MCF 10A (cell line): ENCODE measurements at regions of chr10 and their contacts with region 1.

Region 1: DNA sequence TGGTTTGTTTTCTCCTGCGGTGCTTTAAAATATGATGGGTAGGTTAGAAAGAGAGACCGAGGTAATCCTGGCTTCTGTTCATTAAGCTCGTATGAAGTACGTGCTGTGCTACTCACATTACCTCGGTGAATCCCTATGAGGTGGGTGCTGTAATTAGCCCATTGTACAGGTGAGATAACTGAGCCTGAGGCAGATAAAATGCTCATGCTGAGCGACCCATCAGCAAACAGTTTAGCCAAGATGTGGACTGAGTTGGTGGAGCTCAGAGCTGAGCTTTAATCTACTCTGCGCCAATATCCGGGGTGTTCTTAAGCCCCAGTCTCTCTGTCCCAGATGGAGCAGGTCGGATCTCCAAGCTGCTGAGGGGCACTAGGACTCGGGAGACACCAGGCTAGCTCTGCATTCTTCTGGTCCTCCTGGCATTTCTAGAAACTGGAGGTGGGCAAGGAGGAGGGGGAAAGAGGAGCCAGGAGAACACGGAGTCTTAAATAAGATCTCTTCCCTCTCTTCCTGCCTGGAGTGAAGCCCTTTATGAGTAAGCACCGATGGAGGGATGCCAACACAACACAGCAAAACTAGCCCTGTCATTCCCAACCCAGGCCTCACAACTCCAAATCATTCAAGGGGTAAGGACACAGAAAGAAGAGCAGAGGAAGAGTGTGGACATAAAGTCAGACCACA is 458.5 kb downstream of the KCNMA1 start:
- DNase-seq: peak; percentile 87
- H3K4me3 Mint-ChIP-seq: no peak overlapping the region
- H3K27ac Mint-ChIP-seq: peak overlapping the region; percentile 85
- H3K4me1 Mint-ChIP-seq: peaks cover 8% of the 10 kb centered on the region
- H3K27me3 Mint-ChIP-seq: no peaks in the 10 kb centered on the region
- CTCF ChIP-seq: no peak

Region 2: GRCh38 chr10:77236700-77237099 is 57.5 kb after region 1 on chr10:
- CTCF ChIA-PET with region 1: no interaction called
- POLR2A ChIA-PET with region 1: no interaction called
- intact Hi-C with region 1: loop called (anchors 5 kb)
- DNase-seq: peak; percentile 55
- H3K4me3 Mint-ChIP-seq: no peak overlapping the region
- H3K27ac Mint-ChIP-seq: no peak overlapping the region
- H3K4me1 Mint-ChIP-seq: peaks cover 7% of the 10 kb centered on the region
- H3K27me3 Mint-ChIP-seq: no peaks in the 10 kb centered on the region
- CTCF ChIP-seq: no peak

Region 3: DNA sequence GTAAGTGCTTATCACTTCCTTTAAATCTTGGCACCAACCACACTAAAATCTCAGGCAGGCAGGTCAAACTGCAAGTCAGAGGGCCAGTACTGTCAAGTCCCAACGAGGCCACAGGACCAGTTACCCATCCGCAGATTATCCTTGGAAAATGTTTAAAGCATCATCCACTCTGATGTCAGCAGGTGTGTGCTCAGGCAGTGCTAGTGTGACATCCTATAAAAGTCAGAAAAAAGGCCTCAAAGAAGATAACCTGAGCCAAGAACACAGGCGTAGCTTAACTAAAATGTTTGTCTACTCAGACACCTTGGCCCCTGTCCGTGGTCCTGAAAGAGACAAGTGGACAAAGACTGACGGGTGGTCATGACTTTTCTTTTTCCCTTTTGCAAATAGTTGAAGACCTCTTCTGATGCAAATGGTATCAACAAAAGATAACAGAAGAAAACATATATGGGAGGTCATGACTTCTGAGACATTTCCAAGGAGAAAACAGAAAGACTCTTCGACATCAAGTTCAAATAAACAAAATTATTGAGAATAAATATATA is 149.2 kb after region 1 on chr10:
- CTCF ChIA-PET with region 1: no interaction called
- POLR2A ChIA-PET with region 1: no interaction called
- intact Hi-C with region 1: no loop called
- DNase-seq: peak; percentile 66
- H3K4me3 Mint-ChIP-seq: no peak overlapping the region
- H3K27ac Mint-ChIP-seq: no peak overlapping the region
- H3K4me1 Mint-ChIP-seq: peaks cover 11% of the 10 kb centered on the region
- H3K27me3 Mint-ChIP-seq: no peaks in the 10 kb centered on the region
- CTCF ChIP-seq: no peak